ENCODE measurements at regions of chr15 and their contacts with region 1.

Region 1: DNA sequence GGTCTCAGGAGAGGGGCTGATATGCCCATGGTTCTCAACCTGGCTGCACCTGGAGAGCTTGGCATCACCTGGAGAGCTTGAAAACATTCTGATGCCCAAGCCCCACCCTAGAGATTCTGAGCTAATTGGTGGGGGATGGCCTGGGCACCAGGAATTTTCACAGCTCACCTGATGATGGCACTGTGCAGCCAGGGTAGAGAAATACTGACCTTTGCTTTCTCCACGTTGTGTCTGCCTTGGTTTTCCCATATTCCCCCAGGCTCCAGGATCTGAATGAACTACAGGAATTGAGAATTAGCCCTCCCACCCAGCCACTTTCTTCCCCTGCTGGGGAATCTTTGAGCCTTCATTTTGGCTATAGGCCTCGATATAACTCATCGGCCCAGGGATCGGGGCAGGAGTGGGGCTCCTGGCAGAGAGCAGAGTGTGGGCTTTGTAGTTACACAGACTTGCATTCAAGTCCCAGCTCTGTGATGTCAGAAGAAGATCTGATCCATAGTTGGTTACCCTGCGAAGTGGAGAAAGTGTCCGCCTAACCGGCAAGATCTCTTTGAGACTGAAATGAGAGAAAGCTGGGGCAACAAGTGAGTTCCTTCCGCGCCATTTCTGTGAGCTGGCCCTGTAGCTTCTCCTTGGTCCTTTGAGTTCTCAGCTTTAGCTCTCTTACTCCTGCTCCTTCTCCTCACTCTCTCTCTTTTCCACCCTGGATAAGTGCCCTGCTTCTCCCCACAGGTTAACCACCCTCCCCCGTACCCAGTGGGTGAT is 33.1 kb upstream of the UBE2Q2 start:
- DNase-seq: peak in 2 of 9 experiments; percentile 33 to 41
- ATAC-seq: no peak
- H3K4me3 ChIP-seq: no peak overlapping the region
- H3K4me3 Mint-ChIP-seq: no peak overlapping the region
- H3K27ac ChIP-seq: no peak overlapping the region
- H3K27ac Mint-ChIP-seq: no peak overlapping the region
- H3K4me1 ChIP-seq: no peaks in the 10 kb centered on the region
- H3K4me1 Mint-ChIP-seq: no peaks in the 10 kb centered on the region
- H3K27me3 ChIP-seq: no peaks in the 10 kb centered on the region
- H3K27me3 Mint-ChIP-seq: peaks cover 4% of the 10 kb centered on the region
- CTCF ChIP-seq: no peak

Region 2: GRCh38 chr15:75723847-75724660 is 86.1 kb before region 1 on chr15:
- CTCF ChIA-PET with region 1: interaction called, 85 read pairs
- POLR2A ChIA-PET with region 1: no interaction called
- intact Hi-C with region 1: no loop called
- DNase-seq: peak in 5 of 9 experiments; percentile 15 to 57 (median 23)
- ATAC-seq: no peak
- H3K4me3 ChIP-seq: no peak overlapping the region
- H3K4me3 Mint-ChIP-seq: no peak overlapping the region
- H3K27ac ChIP-seq: no peak overlapping the region
- H3K27ac Mint-ChIP-seq: no peak overlapping the region
- H3K4me1 ChIP-seq: no peaks in the 10 kb centered on the region
- H3K4me1 Mint-ChIP-seq: no peaks in the 10 kb centered on the region
- H3K27me3 ChIP-seq: no peaks in the 10 kb centered on the region
- H3K27me3 Mint-ChIP-seq: peaks cover 16% of the 10 kb centered on the region
- CTCF ChIP-seq: no peak

Region 3: GRCh38 chr15:75857886-75858285 is 47.7 kb after region 1 on chr15:
- CTCF ChIA-PET with region 1: no interaction called
- POLR2A ChIA-PET with region 1: no interaction called
- intact Hi-C with region 1: no loop called
- DNase-seq: no peak
- ATAC-seq: no peak
- H3K4me3 ChIP-seq: no peak overlapping the region
- H3K4me3 Mint-ChIP-seq: no peak overlapping the region
- H3K27ac ChIP-seq: no peak overlapping the region
- H3K27ac Mint-ChIP-seq: no peak overlapping the region
- H3K4me1 ChIP-seq: no peaks in the 10 kb centered on the region
- H3K4me1 Mint-ChIP-seq: peaks cover 23% of the 10 kb centered on the region
- H3K27me3 ChIP-seq: no peaks in the 10 kb centered on the region
- H3K27me3 Mint-ChIP-seq: no peaks in the 10 kb centered on the region
- CTCF ChIP-seq: no peak

Region 4: DNA sequence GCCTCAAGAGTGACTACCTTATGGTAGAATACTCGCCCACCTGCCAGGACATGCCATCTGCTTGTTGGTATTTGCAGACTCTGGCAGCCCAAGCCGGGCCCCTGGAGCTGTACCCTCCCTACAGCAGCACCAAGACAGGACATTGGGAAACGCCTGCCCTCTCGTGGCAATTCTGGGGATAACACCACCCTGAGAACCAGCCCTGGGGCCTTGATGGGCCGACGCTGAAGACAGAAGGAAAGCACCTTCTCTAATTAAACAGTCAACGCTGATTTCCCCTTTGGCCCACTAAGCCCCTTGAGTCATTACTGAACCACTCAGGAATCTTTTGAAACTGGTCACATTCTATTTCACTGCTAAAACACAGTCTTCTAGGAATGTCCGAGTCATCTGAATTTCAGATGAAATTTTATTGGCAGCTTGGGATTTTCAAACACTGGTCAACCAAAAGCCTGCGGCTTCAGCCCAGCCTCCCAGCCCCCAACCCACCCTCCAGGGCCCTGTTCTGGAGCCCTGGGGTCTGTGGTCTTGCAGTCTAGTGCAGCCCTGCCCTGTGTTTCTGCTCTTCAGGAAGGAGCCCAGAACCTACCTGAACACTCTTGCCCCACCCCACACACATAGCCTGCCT is 340.9 kb after region 1 on chr15:
- CTCF ChIA-PET with region 1: interaction called, 3 read pairs
- POLR2A ChIA-PET with region 1: no interaction called
- intact Hi-C with region 1: loop called in 1 of 2 experiments (anchors 5 kb)
- DNase-seq: peak; percentile 59 to 80 (median 72)
- ATAC-seq: peak; percentile 88
- H3K4me3 ChIP-seq: no peak overlapping the region
- H3K4me3 Mint-ChIP-seq: no peak overlapping the region
- H3K27ac ChIP-seq: no peak overlapping the region
- H3K27ac Mint-ChIP-seq: no peak overlapping the region
- H3K4me1 ChIP-seq: no peaks in the 10 kb centered on the region
- H3K4me1 Mint-ChIP-seq: peaks cover 13% of the 10 kb centered on the region
- H3K27me3 ChIP-seq: peaks cover 0 to 3% of the 10 kb centered on the region in 2 experiments
- H3K27me3 Mint-ChIP-seq: peaks cover 10% of the 10 kb centered on the region
- CTCF ChIP-seq: peak; percentile 81

Region 5: DNA sequence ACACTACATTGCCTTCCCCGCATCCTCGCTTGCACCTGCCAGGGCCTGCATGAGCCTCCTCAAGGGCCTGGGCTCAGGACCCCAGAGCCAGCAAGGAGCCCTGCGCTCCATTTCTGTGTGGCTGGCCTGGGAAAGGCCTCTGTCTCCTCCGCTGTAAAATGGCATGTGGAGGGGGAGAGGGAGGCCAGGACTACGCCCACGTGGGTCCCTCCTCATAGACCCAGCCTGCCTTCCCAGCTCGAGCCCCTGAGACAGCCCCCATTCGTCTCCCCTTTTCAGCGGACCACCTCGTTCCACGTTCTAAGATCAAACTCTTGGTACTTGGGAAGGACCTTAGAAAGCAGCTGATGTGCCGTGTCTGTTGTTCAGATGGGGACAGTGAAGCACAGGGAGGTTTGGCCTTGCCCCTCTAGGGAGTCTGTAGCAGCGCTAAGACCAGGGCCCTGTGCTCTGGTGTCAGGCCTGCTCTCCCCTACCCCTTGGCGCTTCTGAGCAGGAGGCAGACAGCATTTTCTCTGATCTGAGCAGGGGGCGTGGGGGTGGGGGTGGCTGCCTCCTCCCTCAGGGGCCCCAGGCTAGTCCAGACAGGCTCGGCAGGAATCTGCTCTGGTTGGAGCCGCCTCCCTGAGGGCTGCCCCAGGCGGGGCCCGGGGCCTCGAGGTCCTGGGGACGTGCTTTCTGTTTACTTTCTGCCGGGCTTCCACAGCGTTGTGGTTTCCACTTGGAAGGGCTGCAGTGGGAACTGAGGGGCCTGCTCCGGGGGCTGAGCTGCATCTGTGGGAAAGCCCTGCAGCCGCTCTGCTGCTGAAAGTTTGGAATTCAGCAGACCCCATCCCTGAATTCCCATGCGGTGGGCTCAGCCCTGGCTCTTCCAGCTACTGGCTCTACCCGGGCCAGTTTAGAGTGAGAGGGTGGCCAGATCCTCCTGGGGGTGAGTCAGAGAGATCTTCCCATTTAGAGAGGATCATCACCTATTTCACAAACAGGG is 1716.9 kb after region 1 on chr15:
- CTCF ChIA-PET with region 1: no interaction called
- POLR2A ChIA-PET with region 1: no interaction called
- intact Hi-C with region 1: no loop called
- DNase-seq: no peak
- ATAC-seq: no peak
- H3K4me3 ChIP-seq: no peak overlapping the region
- H3K4me3 Mint-ChIP-seq: no peak overlapping the region
- H3K27ac ChIP-seq: no peak overlapping the region
- H3K27ac Mint-ChIP-seq: no peak overlapping the region
- H3K4me1 ChIP-seq: no peaks in the 10 kb centered on the region
- H3K4me1 Mint-ChIP-seq: no peaks in the 10 kb centered on the region
- H3K27me3 ChIP-seq: no peaks in the 10 kb centered on the region
- H3K27me3 Mint-ChIP-seq: peaks cover 2% of the 10 kb centered on the region
- CTCF ChIP-seq: no peak